WTC11 (cell line): ENCODE measurements at regions of chr20 and their contacts with region 1.

Region 1: GRCh38 chr20:50750145-50750671 is 18.8 kb downstream of the PARD6B start:
- DNase-seq: no peak
- ATAC-seq: no peak
- H3K4me3 Mint-ChIP-seq: no peak overlapping the region
- H3K27ac Mint-ChIP-seq: no peak overlapping the region
- H3K4me1 Mint-ChIP-seq: peaks cover 22% of the 10 kb centered on the region
- H3K27me3 Mint-ChIP-seq: no peaks in the 10 kb centered on the region
- CTCF ChIP-seq: no peak

Region 2: GRCh38 chr20:50646483-50646996 is 103.7 kb before region 1 on chr20:
- CTCF ChIA-PET with region 1: no interaction called
- POLR2A ChIA-PET with region 1: no interaction called
- DNase-seq: no peak
- ATAC-seq: no peak
- H3K4me3 Mint-ChIP-seq: no peak overlapping the region
- H3K27ac Mint-ChIP-seq: no peak overlapping the region
- H3K4me1 Mint-ChIP-seq: peaks cover 23% of the 10 kb centered on the region
- H3K27me3 Mint-ChIP-seq: no peaks in the 10 kb centered on the region
- CTCF ChIP-seq: peak; percentile 33; the same call in 1 of the 2 replicates

Region 3: DNA sequence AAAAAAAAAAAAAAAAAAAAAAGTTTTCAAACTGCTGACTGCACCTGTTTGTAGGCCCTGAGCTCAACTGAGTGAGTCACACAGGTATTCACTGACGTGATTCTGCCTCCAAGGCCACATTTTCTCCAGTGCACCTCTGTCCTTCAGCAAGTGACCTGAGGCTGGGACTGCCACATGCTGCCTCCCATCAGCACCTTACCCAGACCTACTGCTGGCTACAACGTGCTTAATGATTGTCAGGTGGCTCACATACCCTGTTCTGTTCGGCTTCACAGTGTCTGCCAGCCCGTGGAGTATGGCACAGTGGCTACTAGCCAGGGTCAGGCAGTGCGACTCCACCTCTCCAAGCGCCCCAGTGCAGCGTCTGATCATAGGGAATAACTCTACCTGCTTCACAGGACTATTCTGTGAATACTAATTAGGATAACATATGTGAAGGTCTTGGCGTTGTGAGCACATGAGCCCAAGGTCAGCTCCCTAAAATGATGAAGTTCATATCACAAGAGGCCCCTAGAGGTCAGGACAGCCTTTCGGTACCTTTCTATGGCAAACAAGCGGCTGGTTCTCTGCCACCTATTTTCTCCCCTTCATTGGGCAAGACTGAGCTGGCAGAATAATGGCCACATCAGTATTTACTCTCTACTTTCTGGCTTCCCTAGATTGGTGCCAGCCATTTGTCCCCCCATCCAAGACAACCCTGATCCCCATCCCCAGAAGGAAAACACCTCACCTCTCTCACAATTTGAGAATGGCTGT is 86.9 kb before region 1 on chr20:
- CTCF ChIA-PET with region 1: interaction called, 30 read pairs
- POLR2A ChIA-PET with region 1: interaction called, 3 read pairs
- DNase-seq: no peak
- ATAC-seq: peak; percentile 68
- H3K4me3 Mint-ChIP-seq: no peak overlapping the region
- H3K27ac Mint-ChIP-seq: peak overlapping the region; percentile 38; the same call in 1 of the 2 replicates
- H3K4me1 Mint-ChIP-seq: peaks cover 34% of the 10 kb centered on the region
- H3K27me3 Mint-ChIP-seq: no peaks in the 10 kb centered on the region
- CTCF ChIP-seq: no peak

Region 4: GRCh38 chr20:50713657-50714101 is 36.5 kb before region 1 on chr20:
- CTCF ChIA-PET with region 1: interaction called, 12 read pairs
- POLR2A ChIA-PET with region 1: no interaction called
- DNase-seq: peak; percentile 35
- ATAC-seq: peak; percentile 73
- H3K4me3 Mint-ChIP-seq: no peak overlapping the region
- H3K27ac Mint-ChIP-seq: peak overlapping the region; percentile 55; the same call in 1 of the 2 replicates
- H3K4me1 Mint-ChIP-seq: peaks cover 37% of the 10 kb centered on the region
- H3K27me3 Mint-ChIP-seq: no peaks in the 10 kb centered on the region; the same call in none of the 2 replicates
- CTCF ChIP-seq: no peak

Region 5: DNA sequence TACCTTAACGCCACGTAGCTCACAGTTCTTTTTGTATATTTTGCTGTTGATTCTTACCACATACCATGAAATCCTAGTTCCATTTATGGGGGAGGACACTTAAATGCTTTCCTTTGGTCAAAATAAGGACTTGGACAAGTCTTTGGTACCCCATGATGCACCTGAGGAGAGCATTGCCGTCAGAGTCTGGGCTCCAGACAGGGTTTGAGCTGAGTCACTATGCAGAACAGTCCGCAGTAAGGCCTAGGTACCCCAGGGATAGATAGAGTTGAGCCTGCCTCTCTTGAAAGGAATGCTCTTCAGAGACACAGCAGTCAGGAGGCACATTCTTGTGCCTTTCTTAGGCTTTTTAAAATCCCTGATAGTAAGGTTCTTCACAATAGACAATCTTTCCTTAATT is 12.9 kb before region 1 on chr20:
- CTCF ChIA-PET with region 1: interaction called, 39 read pairs
- POLR2A ChIA-PET with region 1: no interaction called
- DNase-seq: peak; percentile 22
- ATAC-seq: peak; percentile 93
- H3K4me3 Mint-ChIP-seq: no peak overlapping the region
- H3K27ac Mint-ChIP-seq: peak overlapping the region; percentile 94
- H3K4me1 Mint-ChIP-seq: peaks cover 62% of the 10 kb centered on the region
- H3K27me3 Mint-ChIP-seq: no peaks in the 10 kb centered on the region
- CTCF ChIP-seq: no peak

Region 6: DNA sequence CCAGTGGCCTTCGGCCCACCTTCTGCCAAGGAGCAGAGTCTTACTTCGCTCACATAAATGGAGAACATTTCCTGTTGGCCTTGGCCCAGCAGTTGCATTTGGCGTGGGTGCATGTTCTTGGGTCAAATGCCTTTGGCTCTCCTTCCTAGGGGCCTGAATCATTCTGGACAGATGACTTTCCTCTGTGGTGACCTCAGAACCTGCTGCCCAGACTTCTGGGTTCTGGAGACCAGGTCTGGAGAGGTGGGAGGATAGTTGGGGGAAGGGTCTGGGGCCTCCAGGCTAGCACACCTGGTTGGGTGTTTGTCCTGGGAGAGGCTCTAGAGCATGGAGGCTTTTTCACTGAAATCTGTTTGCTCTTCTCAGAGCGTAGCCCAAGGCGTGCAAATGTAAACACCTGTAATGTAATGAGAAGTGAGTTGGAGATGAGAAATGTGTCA is 74.0 kb after region 1 on chr20:
- CTCF ChIA-PET with region 1: no interaction called
- POLR2A ChIA-PET with region 1: no interaction called
- DNase-seq: no peak
- ATAC-seq: no peak
- H3K4me3 Mint-ChIP-seq: no peak overlapping the region
- H3K27ac Mint-ChIP-seq: no peak overlapping the region
- H3K4me1 Mint-ChIP-seq: 0 out of 2 replicates have a peak, but pooled peaks cover 8% of the 10 kb centered on the region
- H3K27me3 Mint-ChIP-seq: no peaks in the 10 kb centered on the region; the same call in 1 of the 2 replicates
- CTCF ChIP-seq: no peak